ENCODE measurements at regions of chr14 and their contacts with region 1.

Region 1: GRCh38 chr14:20413045-20413799 is at the start of gene TEP1:
- DNase-seq: peak; percentile 94
- ATAC-seq: peak; percentile 98
- total RNA-seq, gene TEP1: 9.3 TPM

Region 2: DNA sequence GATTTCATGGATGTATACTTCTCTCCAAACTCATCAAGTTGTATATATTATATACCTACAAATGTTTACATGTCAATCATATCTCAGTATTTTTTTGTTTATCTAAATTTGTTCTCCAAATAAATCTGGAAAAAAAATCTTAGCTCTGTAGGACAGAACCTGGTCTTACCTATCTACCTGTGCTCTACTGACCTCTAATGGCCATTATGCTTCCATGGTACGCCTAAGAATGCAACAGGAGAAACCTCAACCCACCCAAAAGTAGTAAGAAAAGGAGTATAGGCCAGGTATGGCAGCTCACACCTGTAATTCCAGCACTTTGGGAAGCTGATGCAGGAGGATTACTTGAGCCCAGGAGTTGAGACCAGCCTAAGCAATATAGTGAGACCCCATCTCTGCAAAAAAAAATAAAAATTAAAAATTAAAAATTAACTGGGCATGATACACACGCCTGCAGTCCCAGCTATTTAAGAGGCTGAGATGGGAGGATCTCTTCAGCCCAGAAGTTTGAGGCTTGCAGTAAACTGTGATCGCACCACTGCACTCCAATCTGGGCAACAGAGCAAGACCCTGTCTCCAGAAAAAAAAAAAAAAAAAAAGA is 165.5 kb before region 1 on chr14:
- intact Hi-C with region 1: no loop called
- DNase-seq: no peak
- ATAC-seq: no peak

Region 3: DNA sequence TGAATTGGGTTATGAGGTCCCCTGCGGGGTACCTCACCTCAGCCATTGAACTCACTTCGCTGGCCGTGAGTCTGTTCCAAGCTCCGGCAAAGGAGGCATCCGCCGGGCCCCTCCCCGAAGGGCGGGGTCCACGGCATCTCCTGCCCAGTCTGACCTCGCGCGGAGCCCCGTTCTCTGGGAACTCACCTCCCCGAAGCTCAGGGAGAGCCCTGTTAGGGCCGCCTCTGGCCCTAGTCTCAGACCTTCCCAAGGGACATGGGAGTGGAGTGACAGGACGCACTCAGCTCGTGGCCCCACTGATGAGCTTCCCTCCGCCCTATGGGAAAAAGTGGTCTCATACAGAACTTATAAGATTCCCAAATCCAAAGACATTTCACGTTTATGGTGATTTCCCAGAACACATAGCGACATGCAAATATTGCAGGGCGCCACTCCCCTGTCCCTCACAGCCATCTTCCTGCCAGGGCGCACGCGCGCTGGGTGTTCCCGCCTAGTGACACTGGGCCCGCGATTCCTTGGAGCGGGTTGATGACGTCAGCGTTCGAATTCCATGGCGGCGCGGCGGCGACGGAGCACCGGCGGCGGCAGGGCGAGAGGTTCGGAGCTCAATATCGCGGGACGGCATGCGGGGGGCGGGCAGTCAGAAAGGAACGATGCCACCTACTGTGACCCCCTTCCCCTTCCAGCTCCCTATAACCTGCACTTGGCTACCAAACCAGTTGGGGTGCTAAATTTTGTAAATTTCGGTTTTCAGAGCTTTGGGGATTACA is 69.9 kb before region 1 on chr14 and contains the start of gene PARP2:
- intact Hi-C with region 1: loop called (anchors 5 kb)
- DNase-seq: peak; percentile 98
- ATAC-seq: peak; percentile 96
- total RNA-seq, gene PARP2: 15.6 TPM

Region 4: GRCh38 chr14:20454516-20455354 is 41.5 kb after region 1 on chr14 and contains the starts of genes APEX1 and OSGEP:
- intact Hi-C with region 1: loop called (anchors 5 kb)
- DNase-seq: peak; percentile 99
- ATAC-seq: peak; percentile 96
- total RNA-seq, gene APEX1: 69.2 TPM
- total RNA-seq, gene OSGEP: 15.6 TPM

Region 5: DNA sequence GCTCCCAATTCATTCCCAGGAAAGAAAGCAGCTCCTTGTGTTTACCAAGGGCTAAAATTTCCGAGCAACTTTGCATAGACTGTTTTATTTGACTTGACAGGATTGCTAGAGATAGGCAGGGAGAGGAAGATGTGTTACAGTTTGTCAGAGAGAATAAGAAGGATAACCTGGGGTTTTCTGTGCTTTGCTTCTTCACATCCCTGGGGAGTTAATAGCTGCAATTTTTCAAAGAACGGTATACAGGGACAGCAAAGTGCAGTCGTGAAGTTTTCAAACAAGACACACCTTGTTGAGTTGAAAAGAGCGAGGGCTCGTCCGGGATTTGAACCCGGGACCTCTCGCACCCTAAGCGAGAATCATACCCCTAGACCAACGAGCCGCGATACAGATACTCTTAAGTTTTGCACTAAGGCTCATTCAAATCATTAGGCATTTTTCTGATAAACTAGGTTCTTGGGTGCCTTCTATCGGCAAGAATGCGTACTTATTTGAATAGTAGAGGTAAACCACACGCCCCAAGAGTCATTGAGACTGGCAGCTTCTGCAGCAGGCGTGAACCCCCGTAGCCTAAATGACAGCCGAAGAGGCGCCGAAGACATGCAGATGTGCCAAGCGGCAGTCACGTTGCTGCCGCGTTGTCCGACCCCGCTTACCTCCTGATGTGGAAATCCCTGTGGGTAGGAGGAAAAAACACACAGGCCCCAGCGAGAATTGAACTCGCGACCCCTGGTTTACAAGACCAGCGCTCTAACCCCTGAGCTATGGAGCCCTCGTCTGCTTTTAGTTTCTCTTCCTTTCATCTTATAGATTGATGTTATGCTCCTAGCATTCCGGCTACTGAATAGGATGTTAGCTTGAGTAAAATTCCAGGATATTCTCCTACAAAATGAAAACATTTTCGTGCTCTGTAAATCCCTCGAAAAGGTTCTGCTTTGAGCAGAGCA is 200.1 kb after region 1 on chr14:
- intact Hi-C with region 1: loop called (anchors 5 kb)
- DNase-seq: peak; percentile 83
- ATAC-seq: peak; percentile 81

Region 6: GRCh38 chr14:20714593-20715250 is 301.5 kb after region 1 on chr14:
- intact Hi-C with region 1: no loop called
- DNase-seq: peak; percentile 87
- ATAC-seq: peak; percentile 87

Measured in Right ventricle myocardium superior (tissue), 1 donor.